ENCODE measurements at regions of chr6 and their contacts with region 1.

Region 1: DNA sequence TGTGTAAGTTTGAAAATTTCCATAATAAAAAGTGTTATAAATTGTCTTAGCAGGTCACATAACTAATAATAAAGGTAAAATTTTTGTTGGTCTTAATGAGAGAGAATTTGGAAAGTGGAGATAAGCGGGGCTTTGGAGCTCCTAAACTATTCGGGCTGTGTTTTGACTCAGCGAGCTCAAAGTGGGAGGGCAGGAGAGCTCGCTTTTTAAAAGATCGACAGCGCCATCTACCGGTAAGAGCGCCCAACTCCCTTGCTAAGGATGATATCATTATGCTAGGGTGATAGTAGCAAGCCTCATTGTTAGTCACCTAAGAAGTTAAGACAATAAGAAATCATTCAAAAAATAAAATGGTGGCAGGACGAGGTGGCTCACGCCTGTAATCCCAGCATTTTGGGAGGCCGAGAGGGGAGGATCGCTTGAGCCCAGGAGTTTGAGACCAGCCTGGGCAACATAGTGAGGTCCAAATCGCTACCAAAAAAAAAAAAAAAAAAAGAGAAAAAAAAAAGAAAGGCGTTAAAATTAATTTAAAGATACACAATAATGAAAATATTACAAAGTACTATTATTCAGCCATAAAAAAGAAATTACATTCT is 24.8 kb downstream of the C6orf15 start:
- DNase-seq: peak; percentile 97
- ATAC-seq: peak; percentile 95
- H3K4me3 ChIP-seq: peak overlapping the region; percentile 64
- H3K27ac ChIP-seq: peak overlapping the region; percentile 31
- H3K4me1 ChIP-seq: peaks cover 11% of the 10 kb centered on the region
- H3K27me3 ChIP-seq: no peaks in the 10 kb centered on the region
- CTCF ChIP-seq: peak; percentile 87

Region 2: DNA sequence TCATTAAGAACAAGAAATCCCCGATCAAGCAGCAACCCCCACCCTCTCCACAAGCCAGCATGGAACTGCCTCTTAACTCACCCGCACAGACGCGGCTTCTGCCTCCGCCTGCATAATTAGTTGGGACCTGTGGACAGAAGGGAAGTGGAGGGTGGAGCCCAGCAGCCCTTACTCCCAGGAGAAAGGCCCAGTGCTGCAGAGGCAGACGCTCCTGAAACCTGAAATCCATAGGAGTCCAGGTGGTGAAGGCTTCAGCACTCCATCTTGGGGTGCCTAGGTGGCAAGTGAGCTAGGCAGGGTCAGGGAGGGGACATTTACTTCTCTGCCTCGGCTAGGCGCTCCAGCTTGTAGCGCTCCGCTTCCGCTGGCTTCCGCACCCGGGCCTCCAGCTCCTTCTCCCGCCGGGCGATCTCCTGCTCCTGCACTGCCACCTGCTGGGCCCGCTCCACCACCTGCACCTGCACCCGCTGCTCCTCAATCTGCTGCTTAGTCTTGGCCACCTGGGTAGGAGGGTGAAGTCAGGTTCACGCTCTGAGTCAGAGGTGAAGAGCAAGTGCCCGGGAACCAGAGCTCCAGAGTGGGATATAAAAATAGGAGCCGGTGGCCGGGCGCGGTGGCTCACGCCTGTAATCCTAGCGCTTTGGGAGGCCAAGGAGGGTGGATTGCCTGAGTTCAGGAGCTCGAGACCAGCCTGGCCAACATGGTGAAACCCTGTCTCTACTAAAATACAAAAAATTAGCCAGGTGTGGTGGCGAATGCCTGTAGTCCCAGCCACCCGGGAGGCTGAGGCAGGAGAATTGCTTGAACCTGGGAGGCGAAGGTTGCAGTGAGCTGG is 356.8 kb before region 1 on chr6:
- CTCF ChIA-PET with region 1: no interaction called
- POLR2A ChIA-PET with region 1: no interaction called
- intact Hi-C with region 1: loop called (anchors 5 kb)
- DNase-seq: peak; percentile 84
- ATAC-seq: peak; percentile 76
- H3K4me3 ChIP-seq: peak overlapping the region; percentile 25; the same call in 1 of the 2 replicates
- H3K27ac ChIP-seq: peak overlapping the region; percentile 40
- H3K4me1 ChIP-seq: peaks cover 10% of the 10 kb centered on the region; the same call in 1 of the 2 replicates
- H3K27me3 ChIP-seq: no peaks in the 10 kb centered on the region
- CTCF ChIP-seq: peak; percentile 84

Region 3: GRCh38 chr6:30914076-30914853 is 173.3 kb before region 1 on chr6 and contains the start of gene VARS2:
- CTCF ChIA-PET with region 1: interaction called, 23 read pairs
- POLR2A ChIA-PET with region 1: interaction called, 6 read pairs
- intact Hi-C with region 1: loop called (anchors 1 kb)
- DNase-seq: peak; percentile 97
- ATAC-seq: peak; percentile 87
- H3K4me3 ChIP-seq: peak within 1 kb of the TSS; percentile 67
- H3K27ac ChIP-seq: peak within 1 kb of the TSS; percentile 51
- H3K4me1 ChIP-seq: peaks cover 28% of the 10 kb centered on the region
- H3K27me3 ChIP-seq: no peaks in the 10 kb centered on the region
- CTCF ChIP-seq: peak; percentile 50
- total RNA-seq, gene VARS2: 66.5 and 87.8 TPM in 2 replicates

Region 4: DNA sequence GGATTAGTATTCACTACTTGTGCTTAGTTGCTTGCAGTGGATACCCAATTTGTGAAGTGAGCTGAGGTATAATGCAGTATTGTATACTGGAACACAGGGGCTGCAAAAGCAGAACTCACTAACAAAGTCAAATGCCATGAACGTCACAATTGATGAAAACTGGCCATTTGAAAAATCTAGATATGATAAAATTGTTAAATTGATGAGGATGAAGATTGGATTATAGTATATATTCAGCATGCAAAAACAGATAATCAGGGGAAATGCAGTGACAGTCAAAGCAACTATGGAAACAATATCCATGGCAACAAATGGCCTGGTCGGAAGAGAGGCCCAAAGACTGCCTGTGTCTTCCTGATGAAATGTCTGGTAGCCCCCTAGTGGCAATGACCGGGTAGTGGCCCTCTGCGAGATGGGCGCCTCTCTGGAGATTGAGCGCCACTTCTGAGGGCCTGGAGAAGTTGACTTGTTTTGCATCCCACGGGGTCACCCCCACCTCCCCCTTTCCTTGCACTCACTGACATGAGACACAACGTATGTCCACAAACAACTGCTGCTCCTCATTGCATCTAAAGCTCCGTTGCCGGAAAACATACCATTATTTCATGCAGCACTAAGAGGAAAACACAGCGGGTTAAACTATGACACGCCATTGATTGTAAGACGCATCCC is 18.8 kb before region 1 on chr6:
- CTCF ChIA-PET with region 1: interaction called, 32 read pairs
- POLR2A ChIA-PET with region 1: no interaction called
- intact Hi-C with region 1: no loop called
- DNase-seq: peak; percentile 90
- ATAC-seq: peak; percentile 66
- H3K4me3 ChIP-seq: no peak overlapping the region
- H3K27ac ChIP-seq: no peak overlapping the region
- H3K4me1 ChIP-seq: peaks cover 10% of the 10 kb centered on the region
- H3K27me3 ChIP-seq: no peaks in the 10 kb centered on the region
- CTCF ChIP-seq: peak; percentile 97

Region 5: GRCh38 chr6:31128093-31128676 is 40.6 kb after region 1 on chr6:
- CTCF ChIA-PET with region 1: interaction called, 8 read pairs
- POLR2A ChIA-PET with region 1: no interaction called
- intact Hi-C with region 1: loop called (anchors 2 kb)
- DNase-seq: peak; percentile 85
- ATAC-seq: peak; percentile 40
- H3K4me3 ChIP-seq: no peak overlapping the region
- H3K27ac ChIP-seq: no peak overlapping the region
- H3K4me1 ChIP-seq: peaks cover 34% of the 10 kb centered on the region
- H3K27me3 ChIP-seq: no peaks in the 10 kb centered on the region
- CTCF ChIP-seq: peak; percentile 83

Measured in PC-3 (cell line).